ENCODE measurements at regions of chr16 and their contacts with region 1.

Region 1: GRCh38 chr16:17467923-17468540 is 2.7 kb downstream of the XYLT1 start:
- DNase-seq: peak; percentile 58 to 77
- ATAC-seq: peak; percentile 32 to 63 (median 46)
- H3K4me3 ChIP-seq: peak overlapping the region; percentile 18
- H3K27ac ChIP-seq: no peak overlapping the region
- H3K4me1 ChIP-seq: peaks cover 3% of the 10 kb centered on the region
- H3K27me3 ChIP-seq: peaks cover 0 to 12% (median 6%) of the 10 kb centered on the region in 3 donors
- CTCF ChIP-seq: peak; percentile 53

Region 2: GRCh38 chr16:17205279-17206211 is 262.5 kb before region 1 on chr16:
- intact Hi-C with region 1: no loop called
- DNase-seq: no peak
- ATAC-seq: no peak
- H3K4me3 ChIP-seq: no peak overlapping the region
- H3K27ac ChIP-seq: no peak overlapping the region
- H3K4me1 ChIP-seq: no peaks in the 10 kb centered on the region
- H3K27me3 ChIP-seq: no peaks in the 10 kb centered on the region
- CTCF ChIP-seq: no peak

Region 3: DNA sequence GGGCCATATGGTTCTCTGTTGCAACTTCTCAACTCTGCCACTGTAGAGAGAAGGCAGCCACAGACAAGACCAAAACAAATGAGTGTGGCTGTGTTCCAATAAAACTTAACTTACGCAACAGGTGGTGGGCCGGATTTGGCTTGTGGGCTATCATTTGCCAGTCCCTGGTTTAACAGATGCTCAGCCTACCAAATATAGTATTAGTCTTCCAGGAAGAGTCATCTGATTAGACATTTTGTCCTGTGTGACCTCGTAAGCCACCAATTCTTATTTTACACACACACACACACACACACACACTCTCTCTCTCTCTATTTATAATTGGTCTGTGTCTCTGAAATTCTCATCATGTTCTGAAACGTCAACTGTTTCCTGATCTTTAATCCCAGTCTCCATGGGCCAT is 243.2 kb before region 1 on chr16:
- intact Hi-C with region 1: loop called in 1 of 2 experiments (anchors 2 kb)
- DNase-seq: peak; percentile 49 to 72
- ATAC-seq: peak; percentile 93 to 98 (median 97)
- H3K4me3 ChIP-seq: no peak overlapping the region
- H3K27ac ChIP-seq: peak overlapping the region; percentile 59
- H3K4me1 ChIP-seq: peaks cover 27% of the 10 kb centered on the region
- H3K27me3 ChIP-seq: no peaks in the 10 kb centered on the region
- CTCF ChIP-seq: no peak

Region 4: DNA sequence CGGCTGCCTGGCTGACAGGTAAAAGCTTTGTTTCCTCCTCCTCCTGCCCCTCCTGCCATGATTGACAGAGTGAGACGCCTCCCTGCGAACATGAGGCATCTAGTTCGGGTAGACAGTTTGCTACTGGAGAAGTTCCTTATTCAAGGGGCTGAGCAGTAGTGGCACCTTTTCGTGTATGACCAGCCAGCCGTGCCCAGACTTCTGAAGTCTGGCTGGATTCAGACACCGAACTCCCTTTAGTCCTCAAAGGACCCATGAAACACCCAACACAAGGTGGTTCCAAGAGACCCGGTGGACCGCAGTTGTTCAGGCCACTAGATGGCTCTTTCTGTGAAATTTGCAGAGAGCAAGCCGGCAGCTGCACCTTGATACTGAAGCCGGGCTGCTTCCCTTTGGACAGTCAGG is 190.1 kb before region 1 on chr16:
- intact Hi-C with region 1: loop called (anchors 2 to 5 kb)
- DNase-seq: peak in 1 of 2 donors; percentile 58
- ATAC-seq: peak in 3 of 4 donors; percentile 52 to 80 (median 72)
- H3K4me3 ChIP-seq: no peak overlapping the region
- H3K27ac ChIP-seq: no peak overlapping the region
- H3K4me1 ChIP-seq: no peaks in the 10 kb centered on the region
- H3K27me3 ChIP-seq: no peaks in the 10 kb centered on the region
- CTCF ChIP-seq: peak; percentile 45

Region 5: GRCh38 chr16:17289674-17290635 is 178.1 kb before region 1 on chr16:
- intact Hi-C with region 1: loop called in 1 of 2 experiments (anchors 5 kb)
- DNase-seq: no peak
- ATAC-seq: peak in 3 of 4 donors; percentile 78 to 83 (median 81)
- H3K4me3 ChIP-seq: no peak overlapping the region
- H3K27ac ChIP-seq: peak overlapping the region; percentile 48
- H3K4me1 ChIP-seq: peaks cover 26% of the 10 kb centered on the region
- H3K27me3 ChIP-seq: no peaks in the 10 kb centered on the region
- CTCF ChIP-seq: no peak